Ovary (tissue), 10 donors: ENCODE measurements at regions of chr10 and their contacts with region 1.

Region 1: GRCh38 chr10:110225756-110226542 is 18.5 kb downstream of the MXI1 start:
- DNase-seq: peak; percentile 91 to 94 (median 92)
- H3K4me3 ChIP-seq: peak overlapping the region; percentile 94
- H3K27ac ChIP-seq: peak overlapping the region; percentile 91 to 94
- H3K4me1 ChIP-seq: no peaks in the 10 kb centered on the region
- H3K27me3 ChIP-seq: no peaks in the 10 kb centered on the region
- CTCF ChIP-seq: peak; percentile 53 to 86 (median 79)
- EP300 ChIP-seq: peak; percentile 31
- POLR2A ChIP-seq: no peak

Region 2: DNA sequence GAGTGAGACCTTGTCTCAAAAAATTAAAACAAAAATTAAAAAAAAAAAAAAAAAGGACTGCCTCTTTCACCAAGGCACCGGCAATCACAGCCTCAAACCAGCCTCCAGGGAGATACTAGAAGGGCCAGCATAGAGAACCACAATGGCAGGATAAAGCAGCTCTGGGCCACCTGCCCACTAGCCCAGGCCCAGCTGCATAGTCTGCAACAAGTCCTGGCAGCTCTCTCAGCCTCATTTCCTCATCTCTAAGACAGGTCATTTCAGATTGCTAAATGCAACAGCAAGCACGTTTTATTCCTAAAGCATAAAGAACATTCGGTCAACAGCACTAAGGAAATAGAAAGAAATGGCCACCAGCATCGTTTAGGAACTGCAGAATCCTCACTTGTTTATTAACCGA is 331.4 kb before region 1 on chr10:
- intact Hi-C with region 1: loop called in 1 of 4 experiments (anchors 10 kb)
- DNase-seq: peak; percentile 68 to 80 (median 74)
- H3K4me3 ChIP-seq: no peak overlapping the region
- H3K27ac ChIP-seq: peak overlapping the region; percentile 25 to 59
- H3K4me1 ChIP-seq: peaks cover 26% of the 10 kb centered on the region
- H3K27me3 ChIP-seq: no peaks in the 10 kb centered on the region
- CTCF ChIP-seq: no peak
- EP300 ChIP-seq: no peak
- POLR2A ChIP-seq: no peak

Region 3: GRCh38 chr10:110210674-110211464 is 15.1 kb before region 1 on chr10:
- intact Hi-C with region 1: loop called in 1 of 4 experiments (anchors 1 kb)
- DNase-seq: peak; percentile 98 to 99 (median 99)
- H3K4me3 ChIP-seq: peak overlapping the region; percentile 79
- H3K27ac ChIP-seq: peak overlapping the region; percentile 71 to 95
- H3K4me1 ChIP-seq: peaks cover 7% of the 10 kb centered on the region
- H3K27me3 ChIP-seq: no peaks in the 10 kb centered on the region
- CTCF ChIP-seq: no peak
- EP300 ChIP-seq: peak; percentile 23
- POLR2A ChIP-seq: peak; percentile 87

Region 4: DNA sequence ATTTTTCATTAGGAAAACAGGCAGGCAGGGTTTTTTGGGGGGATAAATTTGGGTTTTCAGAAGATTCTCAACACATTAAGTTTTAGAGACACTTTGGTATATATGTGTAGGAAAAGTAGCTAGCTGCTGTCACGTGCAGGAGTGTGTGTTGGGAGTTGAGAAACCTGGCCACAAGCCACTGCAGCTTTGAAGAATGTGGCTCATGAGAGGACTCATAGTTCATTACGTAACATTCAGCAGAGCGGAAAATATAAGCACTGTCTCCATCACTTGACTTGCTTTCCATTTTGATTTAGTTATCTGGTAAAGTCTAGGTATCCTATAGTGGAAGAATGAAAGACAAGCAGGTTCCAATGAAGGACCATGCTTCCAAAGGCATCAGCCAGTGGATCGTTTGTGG is 47.5 kb after region 1 on chr10:
- intact Hi-C with region 1: loop called in 2 of 4 experiments (anchors 5 to 10 kb)
- DNase-seq: peak; percentile 44 to 86 (median 68)
- H3K4me3 ChIP-seq: no peak overlapping the region
- H3K27ac ChIP-seq: no peak overlapping the region
- H3K4me1 ChIP-seq: peaks cover 7% of the 10 kb centered on the region
- H3K27me3 ChIP-seq: no peaks in the 10 kb centered on the region
- CTCF ChIP-seq: no peak
- EP300 ChIP-seq: no peak
- POLR2A ChIP-seq: no peak

Region 5: GRCh38 chr10:110279407-110279986 is 53.5 kb after region 1 on chr10:
- intact Hi-C with region 1: loop called in 2 of 4 experiments (anchors 5 to 10 kb)
- DNase-seq: peak in 4 of 5 donors; percentile 29 to 72 (median 52)
- H3K4me3 ChIP-seq: no peak overlapping the region
- H3K27ac ChIP-seq: no peak overlapping the region
- H3K4me1 ChIP-seq: peaks cover 5% of the 10 kb centered on the region
- H3K27me3 ChIP-seq: no peaks in the 10 kb centered on the region
- CTCF ChIP-seq: peak; percentile 42 to 80 (median 79)
- EP300 ChIP-seq: no peak
- POLR2A ChIP-seq: no peak